ENCODE measurements at regions of chr3 and their contacts with region 1.

Region 1: DNA sequence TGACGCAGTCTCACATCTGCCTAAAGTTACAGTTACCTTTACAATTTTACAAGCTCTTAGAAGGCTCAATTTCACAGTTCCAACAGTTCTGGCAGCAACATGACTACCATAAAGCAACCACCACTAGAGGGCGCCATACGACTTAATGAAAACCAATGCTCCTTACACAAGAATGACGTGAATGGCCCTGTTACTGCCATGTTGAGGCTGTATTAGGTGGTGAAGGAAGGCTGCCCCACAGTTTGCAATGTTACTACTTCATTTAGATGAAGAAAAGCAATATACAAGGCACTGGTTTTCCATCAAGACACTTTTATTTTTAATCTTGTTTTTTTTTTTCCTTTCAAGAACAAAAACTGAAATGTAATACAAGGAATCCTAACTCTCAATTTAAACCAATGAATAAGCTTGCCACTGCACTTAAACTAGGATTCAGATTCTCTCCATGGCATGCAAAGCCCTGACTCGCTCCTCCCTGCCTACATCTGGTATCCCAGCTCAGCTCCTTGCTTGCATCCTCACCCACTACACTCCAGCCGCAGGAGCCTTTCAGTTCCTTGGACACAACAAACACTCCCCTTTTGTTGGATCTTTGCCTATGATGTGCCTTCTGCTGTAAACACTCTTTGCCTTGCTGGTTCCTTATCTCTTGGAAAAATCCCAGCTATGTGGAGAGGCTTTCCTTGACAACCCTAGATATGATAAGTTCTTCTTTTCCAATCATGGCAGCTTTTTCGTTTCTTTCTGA is 270.7 kb downstream of the GBE1 start:
- DNase-seq: peak; percentile 92
- ATAC-seq: peak; percentile 87
- H3K4me3 Mint-ChIP-seq: no peak overlapping the region
- H3K27ac Mint-ChIP-seq: no peak overlapping the region
- H3K4me1 Mint-ChIP-seq: no peaks in the 10 kb centered on the region
- H3K27me3 Mint-ChIP-seq: no peaks in the 10 kb centered on the region
- CTCF ChIP-seq: peak; percentile 78

Region 2: DNA sequence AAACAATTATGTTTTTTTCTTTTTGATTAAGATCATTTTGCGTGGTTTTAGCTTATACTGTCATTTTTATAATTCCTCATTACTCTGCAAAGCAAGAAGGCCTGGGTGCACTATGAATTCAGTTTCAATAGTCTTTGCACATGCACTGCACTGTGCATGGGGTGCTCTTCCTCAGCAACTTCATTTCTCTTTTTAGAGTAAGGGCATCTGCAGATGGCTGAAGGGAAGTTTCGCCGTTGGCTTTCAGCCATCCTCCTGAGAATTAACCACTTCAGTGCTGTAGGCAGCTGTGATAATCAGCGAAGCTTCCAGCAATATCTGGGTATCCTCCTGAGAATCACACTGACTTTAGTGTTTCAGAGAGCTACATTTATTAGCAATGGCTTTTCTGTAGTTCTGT is 14.0 kb before region 1 on chr3:
- CTCF ChIA-PET with region 1: interaction called, 14 read pairs
- POLR2A ChIA-PET with region 1: interaction called, 3 read pairs
- intact Hi-C with region 1: no loop called
- DNase-seq: no peak
- ATAC-seq: no peak
- H3K4me3 Mint-ChIP-seq: no peak overlapping the region
- H3K27ac Mint-ChIP-seq: no peak overlapping the region
- H3K4me1 Mint-ChIP-seq: no peaks in the 10 kb centered on the region
- H3K27me3 Mint-ChIP-seq: peaks cover 3% of the 10 kb centered on the region
- CTCF ChIP-seq: no peak

Region 3: DNA sequence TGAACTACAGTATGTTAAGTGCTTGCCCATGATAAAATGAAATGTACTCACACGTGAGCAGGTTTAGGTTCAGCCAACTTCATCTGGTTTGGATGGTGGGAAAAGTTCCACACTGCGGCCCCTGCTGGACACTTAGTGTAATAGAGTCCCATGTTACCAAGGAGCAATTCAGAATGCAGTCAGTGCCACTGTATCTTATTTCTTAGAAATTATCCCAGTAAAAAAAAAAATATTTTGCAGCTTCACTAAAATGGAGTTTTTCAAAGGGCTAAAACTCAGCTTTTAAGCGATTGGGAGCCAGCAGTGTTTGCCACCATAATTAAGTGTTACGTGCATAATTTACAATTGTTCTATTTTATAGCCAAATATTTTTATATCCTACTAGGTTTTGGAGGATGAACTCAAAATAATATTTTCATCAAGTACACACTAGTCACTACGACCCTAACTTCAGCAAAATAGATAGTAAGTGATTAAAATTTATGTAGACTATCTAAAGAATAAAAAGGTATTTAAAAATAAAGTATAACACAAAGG is 642.4 kb after region 1 on chr3:
- CTCF ChIA-PET with region 1: interaction called, 11 read pairs
- POLR2A ChIA-PET with region 1: no interaction called
- intact Hi-C with region 1: loop called (anchors 5 kb)
- DNase-seq: peak; percentile 68
- ATAC-seq: peak; percentile 81
- H3K4me3 Mint-ChIP-seq: no peak overlapping the region
- H3K27ac Mint-ChIP-seq: no peak overlapping the region
- H3K4me1 Mint-ChIP-seq: no peaks in the 10 kb centered on the region
- H3K27me3 Mint-ChIP-seq: peaks cover 2% of the 10 kb centered on the region
- CTCF ChIP-seq: peak; percentile 83

Measured in activated CD8-positive, alpha-beta T cell treated with anti-CD3 and anti-CD28 coated beads for 36 hours (primary cell).